ENCODE measurements at regions of chr3 and their contacts with region 1.

Region 1: DNA sequence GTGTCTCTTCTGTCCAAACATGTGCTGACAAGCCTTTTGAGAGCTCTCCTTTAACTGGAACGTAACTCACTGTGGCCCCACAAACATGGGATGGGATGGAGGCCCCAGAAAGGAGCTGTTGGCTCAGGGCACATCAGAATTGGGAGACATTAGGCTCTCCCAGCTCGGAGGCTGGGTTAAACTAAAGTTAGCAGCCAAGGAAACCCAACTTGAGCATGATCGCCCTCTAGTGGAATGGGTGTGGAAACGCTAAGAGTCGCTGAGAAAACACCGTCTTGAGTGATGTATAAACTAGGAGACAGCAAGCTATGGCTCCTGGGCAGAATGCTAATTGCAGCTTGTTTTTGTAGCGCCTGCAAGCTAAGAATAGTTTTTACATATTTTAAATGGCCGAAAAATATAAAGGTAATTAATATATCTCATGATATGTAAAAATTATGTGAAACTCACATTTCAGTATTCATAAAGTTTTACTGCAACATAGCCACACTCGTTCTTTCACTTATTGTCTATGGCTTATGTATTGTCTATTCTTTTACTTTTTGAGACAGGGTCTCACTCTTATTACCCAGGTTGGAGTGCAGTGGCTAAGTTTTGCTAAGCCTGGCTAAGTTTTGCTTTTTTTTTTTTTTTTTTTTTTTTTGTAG is 138.8 kb upstream of the HACD2 start:
- DNase-seq: peak in 3 of 4 donors; percentile 40 to 91 (median 86)
- ATAC-seq: peak; percentile 78
- H3K4me3 ChIP-seq: no peak overlapping the region
- H3K27ac ChIP-seq: peak overlapping the region in 1 of 2 donors; percentile 25
- H3K4me1 ChIP-seq: peaks cover 0 to 4% of the 10 kb centered on the region in 2 donors
- H3K27me3 ChIP-seq: no peaks in the 10 kb centered on the region
- CTCF ChIP-seq: peak; percentile 64 to 77

Region 2: DNA sequence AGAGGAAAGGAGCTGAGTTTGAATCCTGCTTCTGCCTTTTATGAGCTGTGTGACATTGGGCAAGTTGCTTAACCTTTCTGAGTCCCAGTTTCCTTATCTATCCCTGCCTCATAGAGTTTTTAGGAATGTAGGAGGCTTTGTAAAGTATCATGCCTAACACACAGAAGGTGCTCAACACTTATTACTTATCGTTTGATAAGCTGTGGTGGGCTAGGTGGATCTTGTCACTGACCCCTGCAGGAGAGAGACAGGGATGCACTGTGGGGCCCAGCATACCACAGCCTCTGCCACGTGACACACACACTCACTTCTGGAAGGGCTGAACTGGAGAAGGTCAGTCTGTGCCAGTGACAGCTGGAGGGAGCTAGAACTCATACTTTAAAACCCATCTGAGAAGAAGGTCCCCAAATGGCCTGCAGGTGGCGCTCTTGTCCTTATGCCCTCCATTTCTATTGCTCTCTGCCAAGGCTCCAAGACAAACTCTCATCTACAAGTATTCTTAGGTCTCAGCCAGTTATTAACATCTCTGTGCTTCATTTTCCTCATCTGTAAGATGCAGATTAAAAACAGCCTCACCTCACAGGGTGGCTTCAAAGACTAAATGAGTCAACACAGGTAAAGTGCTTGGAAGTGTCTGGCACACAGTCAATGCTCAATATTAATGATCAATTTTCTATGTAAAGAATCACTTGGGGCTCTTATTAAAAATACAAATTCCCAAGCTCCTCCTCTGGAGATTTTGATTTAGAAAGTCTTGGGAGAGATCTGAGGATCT is 81.3 kb before region 1 on chr3:
- intact Hi-C with region 1: loop called in 1 of 2 experiments (anchors 5 kb)
- DNase-seq: peak in 3 of 4 donors; percentile 71 to 90 (median 73)
- ATAC-seq: peak; percentile 91
- H3K4me3 ChIP-seq: no peak overlapping the region
- H3K27ac ChIP-seq: no peak overlapping the region
- H3K4me1 ChIP-seq: no peaks in the 10 kb centered on the region
- H3K27me3 ChIP-seq: no peaks in the 10 kb centered on the region
- CTCF ChIP-seq: peak; percentile 72 to 74

Region 3: GRCh38 chr3:123652346-123652984 is 71.2 kb before region 1 on chr3:
- intact Hi-C with region 1: loop called in 1 of 2 experiments (anchors 5 kb)
- DNase-seq: peak; percentile 69 to 91 (median 82)
- ATAC-seq: peak; percentile 95
- H3K4me3 ChIP-seq: no peak overlapping the region
- H3K27ac ChIP-seq: peak overlapping the region; percentile 64 to 80
- H3K4me1 ChIP-seq: peaks cover 26 to 39% of the 10 kb centered on the region in 2 donors
- H3K27me3 ChIP-seq: no peaks in the 10 kb centered on the region
- CTCF ChIP-seq: peak; percentile 71 to 82

Measured in left lung (tissue), 14 donors.